Endothelial cell of umbilical vein (primary cell): ENCODE measurements at regions of chr2 and their contacts with region 1.

Region 1: DNA sequence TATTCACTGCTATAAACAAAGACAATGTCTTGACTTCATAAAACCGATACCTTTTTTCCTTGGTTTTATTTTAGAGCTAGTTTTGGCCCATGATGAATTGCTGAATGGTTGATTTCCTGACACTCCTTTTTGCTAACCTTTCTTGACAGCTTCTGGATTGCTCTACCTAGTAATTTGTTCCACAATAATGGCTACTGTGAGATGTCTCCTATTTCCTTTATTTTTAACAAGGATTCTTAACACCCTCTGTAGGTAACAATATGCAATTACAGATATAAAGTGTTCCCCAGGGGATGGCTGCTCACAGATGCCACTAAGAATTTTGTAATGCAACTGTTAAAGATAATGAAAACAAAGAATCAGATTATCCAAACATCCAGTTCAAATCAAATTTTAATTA is 100.8 kb upstream of the ATP5MC3 start:
- DNase-seq: peak; percentile 44
- H3K4me3 ChIP-seq: no peak overlapping the region
- H3K27ac ChIP-seq: no peak overlapping the region
- H3K4me1 ChIP-seq: no peaks in the 10 kb centered on the region
- H3K27me3 ChIP-seq: peaks cover 17 to 18% of the 10 kb centered on the region in 2 experiments
- CTCF ChIP-seq: peak; percentile 20 to 26
- POLR2A ChIP-seq: no peak

Region 2: DNA sequence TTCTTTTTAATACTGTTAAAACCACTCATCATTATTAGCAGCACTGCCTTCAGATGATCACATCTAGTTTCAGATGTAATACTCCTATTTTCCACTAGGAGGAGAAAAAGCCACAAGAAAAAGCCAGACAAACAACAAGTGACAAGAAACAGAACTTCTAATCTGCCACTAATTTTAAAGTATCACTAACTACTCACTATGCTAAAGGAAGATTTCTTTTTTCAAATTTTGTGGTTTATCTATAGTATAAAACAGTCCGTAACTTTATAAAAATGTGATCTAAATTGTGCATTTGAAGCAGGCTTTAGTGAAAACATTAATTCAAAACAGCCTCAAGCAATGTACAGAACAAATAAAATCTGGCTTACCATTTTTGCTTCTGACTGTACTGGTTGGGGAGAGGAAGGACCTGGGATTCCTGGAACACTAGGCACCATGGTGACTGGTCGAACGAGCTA is 171.1 kb before region 1 on chr2:
- CTCF ChIA-PET with region 1: no interaction called
- POLR2A ChIA-PET with region 1: no interaction called
- dilution Hi-C with region 1: no loop called
- intact Hi-C with region 1: loop called (anchors 10 kb)
- DNase-seq: peak; percentile 63
- H3K4me3 ChIP-seq: no peak overlapping the region
- H3K27ac ChIP-seq: no peak overlapping the region
- H3K4me1 ChIP-seq: no peaks in the 10 kb centered on the region
- H3K27me3 ChIP-seq: no peaks in the 10 kb centered on the region
- CTCF ChIP-seq: peak; percentile 24 to 42
- POLR2A ChIP-seq: no peak

Region 3: DNA sequence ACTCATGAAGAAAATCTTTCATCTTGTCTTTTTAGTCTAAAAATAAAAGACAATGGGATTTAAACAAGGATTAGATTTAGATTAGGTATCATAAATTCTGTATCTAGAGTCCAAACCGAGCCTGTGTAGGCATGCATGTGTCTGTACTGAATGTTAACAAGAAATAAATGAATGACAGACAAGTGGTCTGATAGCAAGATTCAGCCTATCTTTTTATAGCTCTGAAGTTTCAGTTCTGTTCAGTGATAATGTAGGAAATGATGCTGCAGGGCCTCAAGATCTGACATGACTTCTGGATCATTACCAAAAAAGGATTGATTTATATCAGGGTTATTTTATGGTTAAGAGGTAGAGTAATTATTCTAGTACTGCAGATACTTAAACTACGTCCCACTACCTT is 36.3 kb after region 1 on chr2:
- CTCF ChIA-PET with region 1: no interaction called
- POLR2A ChIA-PET with region 1: no interaction called
- dilution Hi-C with region 1: no loop called
- intact Hi-C with region 1: no loop called
- DNase-seq: no peak
- H3K4me3 ChIP-seq: no peak overlapping the region
- H3K27ac ChIP-seq: no peak overlapping the region
- H3K4me1 ChIP-seq: no peaks in the 10 kb centered on the region
- H3K27me3 ChIP-seq: peaks cover 0 to 6% of the 10 kb centered on the region in 2 experiments
- CTCF ChIP-seq: no peak
- POLR2A ChIP-seq: no peak